Right ventricle myocardium inferior (tissue), 1 donor: ENCODE measurements at regions of chr1 and their contacts with region 1.

Region 1: DNA sequence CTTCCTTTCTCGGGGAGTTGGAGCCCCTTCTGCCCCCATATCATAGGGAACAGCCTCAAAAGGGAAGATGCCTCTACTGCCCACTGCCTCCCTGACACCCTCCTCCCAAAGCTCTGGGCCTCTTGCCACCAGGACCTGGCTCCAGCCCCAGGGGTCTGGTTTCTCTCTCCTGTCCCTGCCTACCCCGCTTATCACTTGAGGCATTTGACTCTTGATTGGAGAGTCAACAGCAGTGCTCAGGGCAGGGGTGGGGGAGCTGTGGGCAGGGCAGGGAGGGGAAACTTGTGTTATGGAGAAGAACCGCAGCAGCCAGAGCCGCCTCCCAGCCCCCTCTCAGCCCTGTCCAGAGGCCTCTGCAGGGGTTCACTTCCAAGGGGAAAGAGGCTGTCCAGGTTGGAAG is 573 bp downstream of the TRIM63 start:
- DNase-seq: peak; percentile 78
- ATAC-seq: peak; percentile 90

Region 2: DNA sequence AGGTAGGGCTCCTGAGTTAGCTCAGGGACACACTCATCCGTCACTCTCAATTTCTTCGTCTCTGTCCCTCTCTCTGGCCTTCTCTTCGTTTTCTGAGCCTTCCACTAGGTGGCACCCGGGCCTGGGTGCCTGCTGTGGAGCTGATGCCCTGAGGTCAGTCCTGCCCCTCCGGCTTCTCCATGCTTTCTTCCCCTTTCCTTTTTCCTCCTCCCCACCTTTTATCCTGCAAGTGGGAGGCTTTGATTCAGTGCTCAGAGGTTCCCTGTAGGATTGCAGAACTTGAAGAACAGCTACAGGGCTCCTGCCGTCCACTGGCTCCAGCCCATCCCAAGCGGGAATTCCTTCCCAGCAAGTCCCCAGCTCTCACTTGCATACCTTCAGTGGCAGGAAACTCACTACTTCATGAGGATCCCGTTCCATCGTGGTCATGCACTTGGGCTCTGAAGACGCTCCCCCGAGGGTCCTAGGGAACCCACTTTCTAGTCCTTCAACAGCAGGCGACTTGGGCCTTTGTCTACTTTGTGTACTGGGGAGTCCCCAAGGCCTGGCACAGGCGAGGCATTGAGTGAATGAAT is 1378.1 kb before region 1 on chr1:
- intact Hi-C with region 1: no loop called
- DNase-seq: peak; percentile 87
- ATAC-seq: peak; percentile 85

Region 3: GRCh38 chr1:25997828-25998761 is 68.8 kb before region 1 on chr1 and contains the start of gene PAFAH2:
- intact Hi-C with region 1: no loop called
- DNase-seq: peak; percentile 99
- ATAC-seq: peak; percentile 100
- total RNA-seq, gene PAFAH2: 9.7 TPM

Region 4: GRCh38 chr1:26084091-26084561 is 17.3 kb after region 1 on chr1:
- intact Hi-C with region 1: loop called (anchors 1 kb)
- DNase-seq: no peak
- ATAC-seq: peak; percentile 82

Region 5: GRCh38 chr1:26094677-26095383 is 28.0 kb after region 1 on chr1:
- intact Hi-C with region 1: loop called (anchors 1 kb)
- DNase-seq: no peak
- ATAC-seq: peak; percentile 67